Activated CD4-positive, alpha-beta T cell treated with anti-CD3 and anti-CD28 coated beads for 36 hours (primary cell): ENCODE measurements at regions of chr9 and their contacts with region 1.

Region 1: GRCh38 chr9:75088260-75088905 is at the start of gene OSTF1:
- DNase-seq: peak; percentile 97
- ATAC-seq: peak; percentile 90
- H3K4me3 Mint-ChIP-seq: peak within 1 kb of the TSS; percentile 96
- H3K27ac Mint-ChIP-seq: peak within 1 kb of the TSS; percentile 97
- H3K4me1 Mint-ChIP-seq: peaks cover 64% of the 10 kb centered on the region
- H3K27me3 Mint-ChIP-seq: no peaks in the 10 kb centered on the region
- total RNA-seq, gene OSTF1: 72.6 to 85.5 TPM

Region 2: DNA sequence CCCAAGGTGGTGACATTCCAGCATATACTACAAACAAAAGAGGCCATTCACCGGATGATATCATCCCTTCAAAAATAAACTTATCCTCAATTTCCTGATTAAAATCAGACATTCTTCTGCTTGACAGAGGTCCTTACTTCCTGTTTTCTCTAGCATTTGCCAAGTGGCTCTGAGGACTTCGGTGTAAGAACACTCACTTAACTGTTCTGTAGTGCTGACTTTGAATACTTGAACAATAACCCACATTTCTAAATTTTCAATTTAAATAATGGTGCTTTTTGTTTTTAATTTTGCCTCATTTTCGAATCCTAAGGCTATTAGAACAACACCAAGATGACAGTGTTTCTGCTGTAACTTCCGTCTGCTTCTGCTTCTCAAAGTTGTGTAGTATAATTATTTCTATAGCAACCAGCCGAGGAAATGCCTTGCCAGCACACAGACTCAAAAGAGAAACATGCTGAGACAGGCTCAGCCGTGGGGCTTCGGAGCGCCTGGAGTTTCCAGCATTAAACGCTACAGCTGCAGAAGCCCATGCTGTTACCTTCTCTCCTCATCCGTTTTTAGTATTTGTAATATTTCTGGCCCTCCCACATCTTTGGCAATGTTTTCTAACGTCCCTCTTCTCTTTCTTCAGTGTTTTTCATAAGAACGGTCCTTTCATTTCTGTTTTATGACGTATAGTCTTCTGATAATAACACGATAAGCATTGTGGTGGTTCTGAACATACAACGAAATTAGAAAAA is 1956.2 kb before region 1 on chr9:
- CTCF ChIA-PET with region 1: no interaction called
- POLR2A ChIA-PET with region 1: no interaction called
- intact Hi-C with region 1: loop called in 1 of 2 experiments (anchors 5 kb)
- DNase-seq: peak; percentile 81
- ATAC-seq: peak; percentile 90
- H3K4me3 Mint-ChIP-seq: peak overlapping the region; percentile 72
- H3K27ac Mint-ChIP-seq: peak overlapping the region; percentile 86
- H3K4me1 Mint-ChIP-seq: peaks cover 37% of the 10 kb centered on the region
- H3K27me3 Mint-ChIP-seq: no peaks in the 10 kb centered on the region

Region 3: GRCh38 chr9:73753171-73753570 is 1335.2 kb before region 1 on chr9:
- CTCF ChIA-PET with region 1: no interaction called
- POLR2A ChIA-PET with region 1: no interaction called
- intact Hi-C with region 1: no loop called
- DNase-seq: no peak
- ATAC-seq: no peak
- H3K4me3 Mint-ChIP-seq: no peak overlapping the region
- H3K27ac Mint-ChIP-seq: no peak overlapping the region
- H3K4me1 Mint-ChIP-seq: no peaks in the 10 kb centered on the region
- H3K27me3 Mint-ChIP-seq: no peaks in the 10 kb centered on the region

Region 4: GRCh38 chr9:73824671-73825070 is 1263.7 kb before region 1 on chr9:
- CTCF ChIA-PET with region 1: no interaction called
- POLR2A ChIA-PET with region 1: no interaction called
- intact Hi-C with region 1: no loop called
- DNase-seq: no peak
- ATAC-seq: no peak
- H3K4me3 Mint-ChIP-seq: no peak overlapping the region
- H3K27ac Mint-ChIP-seq: no peak overlapping the region
- H3K4me1 Mint-ChIP-seq: no peaks in the 10 kb centered on the region
- H3K27me3 Mint-ChIP-seq: no peaks in the 10 kb centered on the region

Region 5: GRCh38 chr9:74952281-74953151 is 135.9 kb before region 1 on chr9 and contains the start of gene C9orf40:
- CTCF ChIA-PET with region 1: interaction called, 11 read pairs
- POLR2A ChIA-PET with region 1: interaction called, 4 read pairs
- intact Hi-C with region 1: loop called (anchors 1 kb)
- DNase-seq: peak; percentile 95
- ATAC-seq: peak; percentile 93
- H3K4me3 Mint-ChIP-seq: peak within 1 kb of the TSS; percentile 93
- H3K27ac Mint-ChIP-seq: peak within 1 kb of the TSS; percentile 96
- H3K4me1 Mint-ChIP-seq: peaks cover 28% of the 10 kb centered on the region
- H3K27me3 Mint-ChIP-seq: no peaks in the 10 kb centered on the region
- total RNA-seq, gene C9orf40: 14.0 to 19.7 TPM

Region 6: GRCh38 chr9:74983709-74984108 is 104.7 kb before region 1 on chr9:
- CTCF ChIA-PET with region 1: no interaction called
- POLR2A ChIA-PET with region 1: no interaction called
- intact Hi-C with region 1: no loop called
- DNase-seq: no peak
- ATAC-seq: no peak
- H3K4me3 Mint-ChIP-seq: no peak overlapping the region
- H3K27ac Mint-ChIP-seq: no peak overlapping the region
- H3K4me1 Mint-ChIP-seq: no peaks in the 10 kb centered on the region
- H3K27me3 Mint-ChIP-seq: no peaks in the 10 kb centered on the region

Region 7: GRCh38 chr9:75046725-75047345 is 41.5 kb before region 1 on chr9:
- CTCF ChIA-PET with region 1: no interaction called
- POLR2A ChIA-PET with region 1: no interaction called
- intact Hi-C with region 1: no loop called
- DNase-seq: no peak
- ATAC-seq: no peak
- H3K4me3 Mint-ChIP-seq: no peak overlapping the region
- H3K27ac Mint-ChIP-seq: no peak overlapping the region
- H3K4me1 Mint-ChIP-seq: no peaks in the 10 kb centered on the region
- H3K27me3 Mint-ChIP-seq: peaks cover 8% of the 10 kb centered on the region

Region 8: GRCh38 chr9:75071530-75072124 is 16.8 kb before region 1 on chr9:
- CTCF ChIA-PET with region 1: interaction called, 11 read pairs
- POLR2A ChIA-PET with region 1: interaction called, 5 read pairs
- intact Hi-C with region 1: no loop called
- DNase-seq: peak; percentile 86
- ATAC-seq: peak; percentile 96
- H3K4me3 Mint-ChIP-seq: peak overlapping the region; percentile 11
- H3K27ac Mint-ChIP-seq: peak overlapping the region; percentile 75
- H3K4me1 Mint-ChIP-seq: peaks cover 37% of the 10 kb centered on the region
- H3K27me3 Mint-ChIP-seq: no peaks in the 10 kb centered on the region

Region 9: DNA sequence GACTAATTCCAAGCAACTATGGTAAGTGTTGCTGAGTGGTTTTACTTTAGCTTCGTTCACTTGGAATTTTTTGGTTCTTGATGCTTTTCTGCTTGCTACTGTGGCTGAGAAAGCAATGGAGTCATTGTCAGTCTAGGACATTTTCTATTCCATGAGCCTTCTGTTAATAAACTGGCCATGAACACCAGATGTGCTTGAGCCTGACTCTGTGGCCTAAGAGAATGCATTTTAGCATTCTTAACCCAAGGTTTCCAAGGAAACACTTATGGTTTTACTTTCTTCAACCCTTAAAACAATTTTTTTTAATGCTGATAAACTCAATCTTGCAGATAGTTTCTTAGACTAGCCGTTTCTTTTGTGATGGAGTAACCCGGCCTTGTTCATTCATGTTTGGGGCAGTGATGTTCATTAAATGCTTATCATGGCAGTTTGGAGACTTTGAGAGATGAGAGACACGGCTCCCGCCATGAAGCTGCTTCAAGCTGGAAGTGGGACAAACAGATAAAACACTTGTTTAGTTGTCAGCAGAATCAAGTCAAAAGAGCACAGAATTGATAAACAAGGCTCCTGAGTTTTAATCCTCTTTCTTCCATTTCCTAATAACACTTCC is 42.3 kb after region 1 on chr9:
- CTCF ChIA-PET with region 1: no interaction called
- POLR2A ChIA-PET with region 1: interaction called, 3 read pairs
- intact Hi-C with region 1: loop called (anchors 2 to 5 kb)
- DNase-seq: no peak
- ATAC-seq: no peak
- H3K4me3 Mint-ChIP-seq: no peak overlapping the region
- H3K27ac Mint-ChIP-seq: no peak overlapping the region
- H3K4me1 Mint-ChIP-seq: peaks cover 30% of the 10 kb centered on the region
- H3K27me3 Mint-ChIP-seq: no peaks in the 10 kb centered on the region

Region 10: DNA sequence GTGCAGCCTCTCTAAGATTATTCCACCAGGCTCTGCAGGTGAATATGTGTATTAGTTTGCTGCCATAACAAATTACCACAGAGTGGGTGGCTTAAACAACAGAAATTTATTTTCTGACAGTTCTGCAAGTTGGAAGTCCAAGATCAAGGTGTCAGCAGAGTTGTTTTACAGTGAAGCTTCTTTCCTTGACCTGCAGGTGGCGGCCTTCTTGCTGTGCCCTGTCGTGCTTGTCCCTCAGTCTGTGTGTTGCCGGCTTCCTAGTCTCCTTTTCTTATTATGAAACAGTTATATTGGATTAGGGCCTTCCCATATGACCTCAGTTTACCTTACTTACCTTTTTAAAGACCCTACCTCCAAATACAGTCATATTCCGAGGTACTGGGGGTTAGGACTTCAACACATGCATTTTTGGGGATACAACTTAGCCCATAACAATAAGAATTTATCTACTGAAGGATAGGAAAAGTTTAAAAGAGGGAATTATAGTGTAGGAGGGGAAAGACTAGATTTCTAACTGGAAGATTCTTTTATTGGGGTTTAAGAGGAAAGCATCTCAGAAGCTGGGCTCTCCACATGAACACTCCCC is 97.3 kb after region 1 on chr9:
- CTCF ChIA-PET with region 1: interaction called, 6 read pairs
- POLR2A ChIA-PET with region 1: no interaction called
- intact Hi-C with region 1: loop called in 1 of 2 experiments (anchors 2 kb)
- DNase-seq: peak; percentile 79
- ATAC-seq: peak; percentile 72
- H3K4me3 Mint-ChIP-seq: no peak overlapping the region
- H3K27ac Mint-ChIP-seq: no peak overlapping the region
- H3K4me1 Mint-ChIP-seq: peaks cover 19% of the 10 kb centered on the region
- H3K27me3 Mint-ChIP-seq: no peaks in the 10 kb centered on the region

Region 11: GRCh38 chr9:75890472-75891276 is 802.3 kb after region 1 on chr9 and contains the start of gene PCSK5:
- CTCF ChIA-PET with region 1: no interaction called
- POLR2A ChIA-PET with region 1: no interaction called
- intact Hi-C with region 1: loop called in 1 of 2 experiments (anchors 2 kb)
- DNase-seq: peak; percentile 91
- ATAC-seq: peak; percentile 82
- H3K4me3 Mint-ChIP-seq: peak within 1 kb of the TSS; percentile 93
- H3K27ac Mint-ChIP-seq: peak within 1 kb of the TSS; percentile 76
- H3K4me1 Mint-ChIP-seq: peaks cover 31% of the 10 kb centered on the region
- H3K27me3 Mint-ChIP-seq: peaks cover 4% of the 10 kb centered on the region
- total RNA-seq, gene PCSK5: 3.0 to 3.1 TPM